IMR-90 (cell line): ENCODE measurements at regions of chr12 and their contacts with region 1.

Region 1: DNA sequence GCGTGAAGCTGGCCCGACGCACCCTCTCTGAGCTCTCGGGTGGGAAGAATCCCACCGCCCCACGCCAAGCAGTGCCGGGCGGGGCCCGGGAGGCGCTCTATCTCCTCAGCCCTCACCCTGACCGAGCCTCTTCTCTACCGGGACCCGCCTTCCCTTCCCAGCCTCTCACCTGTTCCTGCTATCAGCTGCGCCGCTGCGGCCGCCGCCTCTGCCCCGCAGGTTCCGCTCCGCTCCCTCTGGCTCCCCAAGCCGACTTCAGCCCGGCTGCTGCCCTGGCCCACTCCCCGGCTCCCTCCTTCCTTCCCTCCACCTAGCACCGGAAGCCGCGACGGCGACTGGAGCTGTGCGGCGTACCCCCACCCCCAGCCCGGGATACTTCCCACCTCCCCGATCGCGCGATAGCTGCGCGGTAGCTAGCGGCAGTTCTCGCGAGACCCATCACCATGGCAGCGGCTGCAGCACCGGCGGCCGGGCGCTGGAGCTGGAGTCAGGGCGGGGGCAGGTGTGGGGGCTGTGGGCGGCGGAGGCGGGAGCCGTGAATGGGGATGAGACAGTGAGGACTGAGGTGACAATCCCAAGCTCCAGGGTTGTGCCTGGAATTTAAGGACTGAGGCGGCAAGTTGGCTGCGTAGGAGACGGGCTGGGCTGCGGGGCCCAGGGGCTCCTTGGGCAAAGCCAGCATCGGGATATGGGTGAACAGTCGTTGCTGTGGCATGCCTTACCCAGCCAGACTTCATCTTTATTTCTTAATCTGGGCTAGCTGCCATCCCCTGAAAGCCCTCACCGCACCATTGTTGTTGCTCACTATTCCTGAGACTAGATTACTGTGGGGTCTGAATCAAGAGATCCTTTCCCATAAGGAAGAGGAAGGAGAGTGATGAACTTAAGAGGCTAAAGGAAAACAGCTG is at the start of gene ARF3:
- DNase-seq: peak; percentile 90
- ATAC-seq: peak; percentile 89
- H3K4me3 ChIP-seq: peak within 1 kb of the TSS; percentile 88
- H3K27ac ChIP-seq: peak within 1 kb of the TSS; percentile 84
- H3K4me1 ChIP-seq: peaks cover 3% of the 10 kb centered on the region; the same call in 1 of the 2 replicates
- H3K27me3 ChIP-seq: peaks cover 5% of the 10 kb centered on the region; the same call in 1 of the 2 replicates
- CTCF ChIP-seq: peak; percentile 0; the same call in 1 of the 2 replicates
- POLR2A ChIP-seq: peak; percentile 89
- RAD21 ChIP-seq: no peak
- total RNA-seq, gene ARF3: 97.7 and 103 TPM in 2 replicates

Region 2: DNA sequence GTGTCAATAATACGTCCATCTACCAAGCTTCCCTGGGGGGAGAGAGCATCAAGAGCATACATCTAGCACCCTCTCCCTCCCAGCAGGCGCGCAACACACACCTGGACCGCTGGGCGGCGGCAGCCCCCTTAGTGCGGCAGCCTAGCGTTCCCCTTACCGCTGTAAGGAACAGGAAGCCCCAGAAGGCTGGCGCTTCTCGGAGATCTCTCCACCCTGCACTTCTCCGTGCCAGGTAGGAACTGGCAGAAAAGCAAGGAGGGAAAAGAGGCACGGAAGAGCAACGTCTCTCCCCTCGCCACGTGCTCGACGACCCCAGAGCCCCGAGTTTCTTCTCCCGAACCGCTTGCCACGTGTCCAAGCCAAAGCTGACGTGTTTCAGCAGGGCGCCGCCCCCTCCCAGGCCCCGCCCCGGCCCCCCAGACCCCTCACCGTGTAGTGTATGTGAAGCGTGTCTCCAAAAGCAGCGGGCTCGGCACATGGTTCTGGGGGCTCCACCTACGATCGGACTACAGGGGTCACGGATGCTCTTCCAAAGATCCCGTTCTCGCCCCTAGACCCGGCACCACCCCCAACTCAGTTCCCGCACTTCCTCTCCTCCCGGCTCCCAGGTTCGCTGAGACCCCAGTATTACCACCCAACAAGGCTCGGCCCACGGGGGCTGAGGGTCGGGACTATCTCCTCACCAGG is 32.6 kb before region 1 on chr12:
- CTCF ChIA-PET with region 1: no interaction called
- POLR2A ChIA-PET with region 1: no interaction called
- dilution Hi-C with region 1: no loop called
- in situ Hi-C with region 1: no loop called
- intact Hi-C with region 1: loop called (anchors 2 kb)
- DNase-seq: peak; percentile 46
- ATAC-seq: peak; percentile 42
- H3K4me3 ChIP-seq: peak overlapping the region; percentile 90
- H3K27ac ChIP-seq: peak overlapping the region; percentile 56
- H3K4me1 ChIP-seq: peaks cover 26% of the 10 kb centered on the region
- H3K27me3 ChIP-seq: no peaks in the 10 kb centered on the region
- CTCF ChIP-seq: peak; percentile 53
- POLR2A ChIP-seq: no peak
- RAD21 ChIP-seq: peak; percentile 59

Region 3: GRCh38 chr12:48995061-48995879 is 37.9 kb after region 1 on chr12:
- CTCF ChIA-PET with region 1: interaction called, 10 read pairs
- POLR2A ChIA-PET with region 1: no interaction called
- dilution Hi-C with region 1: no loop called
- in situ Hi-C with region 1: no loop called
- intact Hi-C with region 1: no loop called
- DNase-seq: peak; percentile 73
- ATAC-seq: peak; percentile 77
- H3K4me3 ChIP-seq: no peak overlapping the region
- H3K27ac ChIP-seq: no peak overlapping the region
- H3K4me1 ChIP-seq: peaks cover 12% of the 10 kb centered on the region
- H3K27me3 ChIP-seq: peaks cover 44% of the 10 kb centered on the region
- CTCF ChIP-seq: peak; percentile 85
- POLR2A ChIP-seq: no peak
- RAD21 ChIP-seq: peak; percentile 84